GM12878 (cell line): ENCODE measurements at regions of chr1 and their contacts with region 1.

Region 1: DNA sequence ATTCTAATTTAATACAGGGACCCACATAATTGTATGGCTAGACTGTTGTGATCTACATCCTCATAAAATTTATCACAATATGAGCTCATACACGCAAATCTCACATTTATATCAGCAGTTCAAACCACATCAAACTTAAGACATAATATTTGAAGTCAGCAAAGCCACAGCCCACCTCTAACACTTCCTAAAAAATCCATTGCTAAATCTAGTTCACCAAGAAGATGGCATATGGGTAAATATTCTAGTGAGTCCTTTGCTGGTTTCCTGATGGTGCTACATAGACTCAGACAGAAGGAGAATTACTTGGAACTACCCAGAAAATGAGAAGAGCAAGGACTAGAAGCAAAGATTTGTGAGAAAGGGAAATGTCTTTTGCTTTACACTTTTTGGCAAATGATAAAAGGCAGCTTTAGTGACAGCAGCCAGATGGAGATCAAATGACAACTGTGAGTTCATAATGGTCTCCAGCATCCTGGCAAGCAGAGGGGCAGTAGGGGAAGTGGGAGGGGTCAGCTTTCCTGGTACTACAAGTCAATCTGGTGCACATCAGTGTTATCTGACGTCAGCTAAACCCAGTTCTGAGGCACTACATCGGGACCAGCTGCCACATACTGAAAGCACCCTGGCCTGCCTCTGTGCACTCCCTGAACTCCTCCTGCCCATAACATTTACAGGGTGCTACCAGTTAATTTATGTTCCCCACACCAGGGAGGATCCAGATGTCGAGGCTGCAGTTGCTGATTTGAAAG is 10.6 kb upstream of the GADD45A start:
- DNase-seq: no peak
- ATAC-seq: peak; percentile 84
- H3K4me3 ChIP-seq: no peak overlapping the region
- H3K27ac ChIP-seq: no peak overlapping the region
- H3K4me1 ChIP-seq: no peaks in the 10 kb centered on the region
- H3K27me3 ChIP-seq: no peaks in the 10 kb centered on the region
- CTCF ChIP-seq: no peak
- EP300 ChIP-seq: no peak
- POLR2A ChIP-seq: no peak
- RAD21 ChIP-seq: no peak

Region 2: DNA sequence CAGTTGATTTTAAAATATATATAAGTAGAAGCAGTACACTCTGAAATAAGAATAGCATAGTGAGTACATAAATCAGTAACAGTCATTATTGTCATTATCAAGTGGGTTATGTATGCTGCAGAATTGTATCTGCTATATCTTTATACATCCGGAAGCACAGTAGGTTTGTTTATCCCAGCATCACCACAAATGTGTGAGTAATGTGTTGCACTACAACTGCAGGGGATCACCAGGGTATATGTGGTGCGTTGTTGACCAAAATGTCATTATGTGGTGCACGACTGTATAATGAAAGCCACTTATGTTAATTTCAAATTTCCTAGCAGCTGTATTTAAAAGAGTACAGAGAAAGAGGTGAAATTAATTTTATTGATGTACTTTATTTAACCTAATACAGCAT is 77.1 kb before region 1 on chr1:
- CTCF ChIA-PET with region 1: no interaction called
- POLR2A ChIA-PET with region 1: no interaction called
- RAD21 ChIA-PET with region 1: no interaction called
- SMC1A ChIA-PET with region 1: no interaction called
- in situ Hi-C with region 1: no loop called
- intact Hi-C with region 1: no loop called
- DNase-seq: no peak
- ATAC-seq: no peak
- H3K4me3 ChIP-seq: no peak overlapping the region
- H3K27ac ChIP-seq: no peak overlapping the region
- H3K4me1 ChIP-seq: no peaks in the 10 kb centered on the region
- H3K27me3 ChIP-seq: no peaks in the 10 kb centered on the region
- CTCF ChIP-seq: no peak
- EP300 ChIP-seq: no peak
- POLR2A ChIP-seq: no peak
- RAD21 ChIP-seq: no peak

Region 3: DNA sequence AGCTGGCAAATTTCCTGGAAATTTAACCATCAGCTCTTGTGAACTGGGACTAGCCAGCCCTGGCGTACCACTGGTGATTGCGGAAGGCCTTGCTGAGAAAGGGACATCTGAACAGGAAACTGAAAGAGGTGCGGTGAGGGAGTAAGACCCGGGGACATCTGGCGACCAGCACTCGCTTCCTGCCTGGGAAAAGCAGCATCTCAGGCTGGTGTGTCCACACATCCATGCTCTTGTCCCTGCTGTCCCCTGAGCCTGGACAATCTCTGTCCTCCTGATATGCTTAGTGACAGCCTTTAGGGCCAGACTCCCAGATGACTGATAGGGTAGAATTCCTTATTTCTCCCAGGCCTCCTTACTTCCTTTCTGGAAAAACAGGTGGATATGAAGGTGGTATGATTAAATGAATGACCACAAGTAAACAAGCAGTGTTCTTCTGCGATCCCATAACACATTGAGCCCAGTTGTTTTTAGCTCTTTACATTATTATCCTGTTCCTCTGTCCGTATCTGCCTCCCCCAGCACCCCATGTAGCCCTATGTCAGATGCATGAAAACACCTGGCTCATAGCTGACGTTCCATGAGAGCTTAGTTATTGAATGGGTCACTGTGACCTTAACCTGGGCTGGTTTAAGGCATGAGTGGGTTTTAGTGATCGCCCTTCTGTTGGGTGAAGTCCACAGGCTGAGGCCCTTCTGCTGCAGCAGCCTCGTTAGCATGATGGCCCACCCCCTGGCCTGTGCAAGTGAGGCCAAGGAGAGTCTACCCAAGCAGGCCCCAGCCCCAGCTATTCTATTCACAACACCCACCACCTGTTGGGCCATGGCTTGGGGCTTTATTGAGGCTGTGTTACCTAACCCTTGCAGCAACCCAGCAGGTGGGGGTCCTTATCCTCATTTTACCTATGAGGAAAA is 65.5 kb before region 1 on chr1:
- CTCF ChIA-PET with region 1: interaction called, 4 read pairs
- POLR2A ChIA-PET with region 1: interaction called, 3 read pairs
- RAD21 ChIA-PET with region 1: no interaction called
- SMC1A ChIA-PET with region 1: interaction called, 11 read pairs
- in situ Hi-C with region 1: no loop called
- intact Hi-C with region 1: no loop called
- DNase-seq: peak; percentile 5
- ATAC-seq: peak; percentile 45
- H3K4me3 ChIP-seq: no peak overlapping the region
- H3K27ac ChIP-seq: no peak overlapping the region
- H3K4me1 ChIP-seq: no peaks in the 10 kb centered on the region
- H3K27me3 ChIP-seq: no peaks in the 10 kb centered on the region
- CTCF ChIP-seq: no peak
- EP300 ChIP-seq: no peak
- POLR2A ChIP-seq: no peak
- RAD21 ChIP-seq: no peak